ENCODE measurements at regions of chr2 and their contacts with region 1.

Region 1: GRCh38 chr2:185208261-185208660 is 530.3 kb upstream of the FSIP2 start:
- DNase-seq: peak in 2 of 4 experiments; percentile 5 to 6
- ATAC-seq: no peak
- H3K4me3 ChIP-seq: no peak overlapping the region
- H3K27ac ChIP-seq: no peak overlapping the region
- H3K4me1 ChIP-seq: no peaks in the 10 kb centered on the region
- H3K27me3 ChIP-seq: no peaks in the 10 kb centered on the region
- CTCF ChIP-seq: 0 out of 6 replicates have a peak, but pooled peaks of 1 of the 3 experiments have one; percentile 10
- EP300 ChIP-seq: no peak
- POLR2A ChIP-seq: no peak
- RAD21 ChIP-seq: peak in 1 of 2 experiments; percentile 21; a peak in 2 of 4 replicates

Region 2: GRCh38 chr2:183656121-183656520 is 1552.1 kb before region 1 on chr2:
- CTCF ChIA-PET with region 1: no interaction called
- POLR2A ChIA-PET with region 1: no interaction called
- in situ Hi-C with region 1: no loop called
- intact Hi-C with region 1: loop called (anchors 5 kb)
- DNase-seq: no peak
- ATAC-seq: no peak
- H3K4me3 ChIP-seq: no peak overlapping the region
- H3K27ac ChIP-seq: no peak overlapping the region
- H3K4me1 ChIP-seq: no peaks in the 10 kb centered on the region
- H3K27me3 ChIP-seq: no peaks in the 10 kb centered on the region
- CTCF ChIP-seq: no peak
- EP300 ChIP-seq: no peak
- POLR2A ChIP-seq: no peak
- RAD21 ChIP-seq: no peak

Region 3: DNA sequence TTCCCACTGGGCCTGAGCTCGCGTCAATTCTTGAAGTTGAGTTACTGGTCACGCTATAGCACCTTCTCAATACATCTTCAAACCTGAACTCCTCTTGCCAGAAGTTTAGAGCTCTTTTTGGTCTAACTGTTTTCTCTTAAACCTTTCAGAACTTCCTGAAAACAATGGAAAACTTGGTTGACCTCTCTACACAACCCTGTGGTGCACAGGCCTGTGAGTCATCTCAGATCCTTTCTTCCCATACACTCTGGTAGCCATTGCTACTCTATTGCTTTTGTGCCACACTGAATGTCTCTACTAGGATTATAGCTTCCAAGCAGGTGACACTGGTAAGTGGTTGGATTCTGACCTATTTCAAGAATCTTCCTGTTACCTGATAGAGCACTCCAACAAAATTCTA is 208.8 kb after region 1 on chr2:
- CTCF ChIA-PET with region 1: no interaction called
- POLR2A ChIA-PET with region 1: no interaction called
- in situ Hi-C with region 1: no loop called
- intact Hi-C with region 1: no loop called
- DNase-seq: no peak
- ATAC-seq: no peak
- H3K4me3 ChIP-seq: no peak overlapping the region
- H3K27ac ChIP-seq: no peak overlapping the region
- H3K4me1 ChIP-seq: no peaks in the 10 kb centered on the region
- H3K27me3 ChIP-seq: no peaks in the 10 kb centered on the region
- CTCF ChIP-seq: no peak
- EP300 ChIP-seq: no peak
- POLR2A ChIP-seq: no peak
- RAD21 ChIP-seq: no peak

Measured in K562 (cell line).